Heart right ventricle (tissue), 16 donors: ENCODE measurements at regions of chr19 and their contacts with region 1.

Region 1: DNA sequence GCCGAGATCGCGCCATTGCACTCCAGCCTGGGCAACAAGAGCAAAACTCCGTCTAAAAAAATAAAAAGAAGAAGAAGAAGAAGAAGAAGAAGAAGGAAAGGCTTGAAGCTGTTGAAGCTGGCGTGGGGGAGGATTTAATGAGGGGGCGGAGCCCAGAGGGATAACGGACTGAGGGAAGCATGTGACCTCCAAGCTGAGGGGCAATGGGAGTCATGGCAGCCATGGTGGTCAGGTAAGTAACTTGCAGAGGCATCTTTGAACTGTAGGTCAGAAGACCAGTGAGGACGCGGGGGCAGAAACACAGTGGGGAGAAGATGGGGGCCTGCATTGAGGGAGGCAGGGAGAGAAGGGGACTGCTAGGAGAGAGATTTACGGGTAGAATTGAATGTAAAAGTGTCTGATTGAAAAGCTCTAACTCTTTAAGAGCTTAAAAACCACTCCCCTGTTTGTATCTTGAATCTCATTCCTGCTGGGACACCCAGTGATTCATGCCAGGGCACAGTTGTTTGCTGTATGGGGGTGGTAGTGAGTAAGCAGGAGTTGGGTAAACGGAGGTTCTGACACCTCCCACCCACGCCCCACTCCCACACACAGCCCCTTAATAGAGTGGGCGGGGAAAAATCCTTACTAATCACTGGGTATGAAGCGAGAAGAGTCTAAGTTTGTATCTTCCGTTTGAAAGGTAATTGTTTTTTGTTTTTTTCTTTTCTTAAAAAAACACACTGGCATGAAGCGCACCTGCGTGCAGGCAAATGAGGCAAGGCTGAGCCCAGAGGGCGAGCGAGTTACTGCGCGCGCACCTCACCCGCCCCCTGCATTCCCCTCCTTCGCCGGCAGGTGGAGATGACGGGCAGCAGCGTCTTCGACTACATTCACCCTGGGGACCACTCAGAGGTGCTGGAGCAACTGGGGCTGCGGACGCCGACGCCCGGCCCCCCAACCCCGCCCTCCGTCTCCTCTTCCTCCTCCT is 13.0 kb downstream of the TMEM160 start:
- DNase-seq: peak; percentile 82 to 90
- ATAC-seq: peak; percentile 87 to 95 (median 92)
- H3K4me3 ChIP-seq: peak overlapping the region; percentile 1 to 57 (median 48)
- H3K27ac ChIP-seq: peak overlapping the region in 1 of 10 donors; percentile 26
- H3K4me1 ChIP-seq: peaks cover 0 to 17% (median 9%) of the 10 kb centered on the region in 9 donors
- H3K27me3 ChIP-seq: peaks cover 0 to 25% (median 21%) of the 10 kb centered on the region in 7 donors
- CTCF ChIP-seq: peak; percentile 91 to 99 (median 97)

Region 2: GRCh38 chr19:46975925-46976782 is 59.3 kb before region 1 on chr19:
- intact Hi-C with region 1: no loop called
- DNase-seq: peak; percentile 90 to 94
- ATAC-seq: peak; percentile 84 to 94 (median 90)
- H3K4me3 ChIP-seq: peak overlapping the region in 1 of 10 donors; percentile 7
- H3K27ac ChIP-seq: peak overlapping the region; percentile 68 to 96 (median 86)
- H3K4me1 ChIP-seq: peaks cover 25 to 88% (median 72%) of the 10 kb centered on the region in 9 donors
- H3K27me3 ChIP-seq: no peaks in the 10 kb centered on the region
- CTCF ChIP-seq: no peak

Region 3: DNA sequence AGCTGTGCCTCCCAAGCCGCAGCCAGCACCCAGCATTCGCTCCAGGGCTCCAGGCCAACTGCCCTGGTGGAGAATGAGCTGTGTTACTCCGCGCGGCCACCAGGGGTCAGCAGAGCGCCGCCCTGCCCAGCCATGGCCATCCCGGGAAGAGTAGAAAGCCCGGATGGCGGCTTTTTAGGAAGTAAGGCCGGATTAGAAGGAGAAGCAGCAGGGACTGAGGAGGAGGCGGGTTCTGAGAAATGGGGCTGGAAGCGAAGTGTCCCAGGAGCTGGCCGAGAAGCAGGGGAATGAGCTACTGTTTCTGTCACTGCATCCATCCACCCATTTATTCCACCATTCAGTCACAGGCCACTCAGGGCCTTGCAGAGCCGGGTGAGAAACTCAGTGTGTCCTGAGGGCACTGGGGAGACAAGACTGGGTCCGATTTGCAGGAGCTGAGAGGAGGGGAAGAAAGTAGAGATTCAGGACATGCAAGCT is 22.3 kb before region 1 on chr19:
- intact Hi-C with region 1: loop called in 1 of 10 experiments (anchors 2 kb)
- DNase-seq: peak; percentile 81 to 87
- ATAC-seq: peak; percentile 89 to 97 (median 96)
- H3K4me3 ChIP-seq: no peak overlapping the region
- H3K27ac ChIP-seq: no peak overlapping the region
- H3K4me1 ChIP-seq: peaks cover 0 to 9% (median 4%) of the 10 kb centered on the region in 9 donors
- H3K27me3 ChIP-seq: peaks cover 0 to 11% (median 0%) of the 10 kb centered on the region in 7 donors
- CTCF ChIP-seq: peak; percentile 98 to 100 (median 99)

Region 4: DNA sequence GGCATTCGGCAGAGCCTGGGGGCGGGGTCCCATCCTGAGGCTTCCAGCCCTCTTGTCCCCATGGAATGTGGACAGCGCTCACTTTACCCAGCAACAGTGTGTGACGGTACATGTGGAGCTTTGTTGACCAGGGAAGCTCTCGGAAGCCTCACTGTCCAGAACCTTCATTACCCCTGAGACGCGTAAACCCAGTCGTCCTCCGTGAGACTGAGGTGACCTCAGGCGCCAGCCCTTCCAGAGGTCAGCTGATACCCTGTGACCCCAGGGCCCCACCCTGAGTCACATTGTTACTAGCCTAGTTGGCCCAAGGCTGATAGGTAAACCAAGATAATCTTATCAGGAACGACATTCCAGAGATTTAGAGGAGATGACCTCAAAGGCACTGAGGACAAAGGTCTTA is 23.2 kb after region 1 on chr19:
- intact Hi-C with region 1: loop called in 1 of 10 experiments (anchors 2 kb)
- DNase-seq: no peak
- ATAC-seq: no peak
- H3K4me3 ChIP-seq: no peak overlapping the region
- H3K27ac ChIP-seq: no peak overlapping the region
- H3K4me1 ChIP-seq: no peaks in the 10 kb centered on the region
- H3K27me3 ChIP-seq: no peaks in the 10 kb centered on the region
- CTCF ChIP-seq: no peak

Region 5: DNA sequence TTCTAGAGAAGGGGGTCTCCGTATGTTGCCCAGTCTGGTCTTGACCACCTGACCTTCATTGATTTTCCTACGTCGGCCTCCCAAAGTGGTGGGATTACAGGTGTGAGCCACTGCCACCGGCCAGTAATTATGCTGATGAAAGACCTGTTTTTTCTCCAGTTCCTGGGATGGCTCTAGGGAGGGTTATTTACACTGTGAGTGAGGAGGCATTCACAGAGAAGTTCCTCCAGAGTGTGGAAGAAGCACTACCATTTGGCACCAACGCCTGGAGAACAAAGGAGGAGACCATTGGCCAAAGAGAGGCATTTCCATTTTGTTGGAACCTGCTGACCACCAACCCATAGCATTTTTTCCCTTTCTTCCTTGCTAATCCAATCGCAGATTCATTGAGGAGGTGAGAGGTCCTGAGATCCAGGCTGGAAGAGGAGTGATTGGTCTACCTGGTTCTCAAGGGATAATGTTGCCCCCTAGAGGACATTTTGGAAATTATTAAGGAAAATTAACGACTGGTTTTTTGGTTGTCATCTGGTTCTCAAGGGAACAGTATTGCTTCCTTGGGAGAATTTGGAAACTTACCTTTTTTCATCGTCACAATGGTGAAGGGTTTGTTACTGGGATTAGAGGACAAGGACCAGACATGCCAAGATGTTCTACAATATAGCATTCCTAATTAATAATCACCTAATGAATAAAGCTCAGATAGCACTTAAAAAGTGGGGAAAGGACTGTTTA is 89.7 kb after region 1 on chr19:
- intact Hi-C with region 1: loop called in 9 of 10 experiments (anchors 2 to 10 kb)
- DNase-seq: no peak
- ATAC-seq: peak; percentile 50 to 82 (median 76)
- H3K4me3 ChIP-seq: no peak overlapping the region
- H3K27ac ChIP-seq: no peak overlapping the region
- H3K4me1 ChIP-seq: peaks cover 0 to 4% (median 0%) of the 10 kb centered on the region in 9 donors
- H3K27me3 ChIP-seq: no peaks in the 10 kb centered on the region
- CTCF ChIP-seq: peak; percentile 61 to 82 (median 71)

Region 6: GRCh38 chr19:47130591-47131227 is 95.3 kb after region 1 on chr19 and contains the start of gene SAE1:
- intact Hi-C with region 1: loop called in 8 of 10 experiments (anchors 2 to 10 kb)
- DNase-seq: peak; percentile 95
- ATAC-seq: peak; percentile 94 to 98 (median 96)
- H3K4me3 ChIP-seq: peak within 1 kb of the TSS; percentile 61 to 86 (median 72)
- H3K27ac ChIP-seq: peak within 1 kb of the TSS; percentile 68 to 94 (median 91)
- H3K4me1 ChIP-seq: peaks cover 0 to 51% (median 33%) of the 10 kb centered on the region in 9 donors
- H3K27me3 ChIP-seq: no peaks in the 10 kb centered on the region
- CTCF ChIP-seq: peak; percentile 9 to 82 (median 51)
- total RNA-seq, gene SAE1: 32.5 to 53.3 (median 45.5) TPM